OCI-LY7 (cell line): ENCODE measurements at regions of chr4 and their contacts with region 1.

Region 1: DNA sequence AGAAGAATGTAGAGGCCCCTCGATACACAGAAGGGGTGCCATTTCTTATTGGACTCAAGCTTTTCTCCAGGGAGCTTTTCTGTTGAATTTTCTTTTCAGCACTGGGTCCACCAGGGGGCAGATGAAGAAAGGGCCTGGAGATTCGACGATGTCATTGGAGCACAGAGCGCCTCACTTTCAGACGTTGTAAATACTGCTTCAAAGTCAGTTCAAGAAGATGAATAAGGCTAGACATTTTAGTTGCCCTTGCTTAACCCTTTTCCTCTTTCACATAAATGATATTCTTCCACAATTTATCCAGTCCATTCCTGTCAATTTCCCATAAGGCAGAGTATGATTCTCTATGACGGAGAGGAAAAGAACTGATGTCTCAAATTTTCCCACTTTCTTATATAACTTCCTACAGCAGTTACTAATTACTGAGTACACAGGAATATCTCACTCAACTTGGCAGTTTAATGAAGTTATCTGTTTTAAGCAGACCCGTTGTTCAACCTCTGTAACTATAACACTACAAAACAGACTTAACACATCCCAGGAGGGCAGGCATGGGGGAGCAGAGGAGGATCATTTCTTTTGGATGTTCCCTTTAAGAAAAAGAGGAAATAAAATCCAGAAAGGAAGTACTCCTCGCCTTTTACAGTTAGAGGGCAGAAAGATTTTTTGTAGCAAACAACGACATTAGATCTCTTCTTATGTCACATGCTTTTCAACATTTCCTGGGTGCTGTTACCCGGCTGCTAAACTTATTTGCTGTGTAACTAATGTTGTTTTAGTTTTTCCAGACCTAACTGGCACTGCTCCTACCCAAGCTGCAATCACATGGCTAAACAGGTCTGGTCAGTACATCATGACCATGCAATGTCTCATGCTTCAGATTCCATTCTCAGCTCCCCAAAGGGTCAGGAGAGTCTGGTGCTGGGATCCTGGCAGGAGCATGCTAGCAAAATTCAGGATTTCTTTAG is 12.2 kb upstream of the CENPU start:
- DNase-seq: peak; percentile 83
- H3K4me3 ChIP-seq: no peak overlapping the region
- H3K27ac ChIP-seq: no peak overlapping the region
- H3K4me1 ChIP-seq: peaks cover 9% of the 10 kb centered on the region
- CTCF ChIP-seq: peak; percentile 94

Region 2: DNA sequence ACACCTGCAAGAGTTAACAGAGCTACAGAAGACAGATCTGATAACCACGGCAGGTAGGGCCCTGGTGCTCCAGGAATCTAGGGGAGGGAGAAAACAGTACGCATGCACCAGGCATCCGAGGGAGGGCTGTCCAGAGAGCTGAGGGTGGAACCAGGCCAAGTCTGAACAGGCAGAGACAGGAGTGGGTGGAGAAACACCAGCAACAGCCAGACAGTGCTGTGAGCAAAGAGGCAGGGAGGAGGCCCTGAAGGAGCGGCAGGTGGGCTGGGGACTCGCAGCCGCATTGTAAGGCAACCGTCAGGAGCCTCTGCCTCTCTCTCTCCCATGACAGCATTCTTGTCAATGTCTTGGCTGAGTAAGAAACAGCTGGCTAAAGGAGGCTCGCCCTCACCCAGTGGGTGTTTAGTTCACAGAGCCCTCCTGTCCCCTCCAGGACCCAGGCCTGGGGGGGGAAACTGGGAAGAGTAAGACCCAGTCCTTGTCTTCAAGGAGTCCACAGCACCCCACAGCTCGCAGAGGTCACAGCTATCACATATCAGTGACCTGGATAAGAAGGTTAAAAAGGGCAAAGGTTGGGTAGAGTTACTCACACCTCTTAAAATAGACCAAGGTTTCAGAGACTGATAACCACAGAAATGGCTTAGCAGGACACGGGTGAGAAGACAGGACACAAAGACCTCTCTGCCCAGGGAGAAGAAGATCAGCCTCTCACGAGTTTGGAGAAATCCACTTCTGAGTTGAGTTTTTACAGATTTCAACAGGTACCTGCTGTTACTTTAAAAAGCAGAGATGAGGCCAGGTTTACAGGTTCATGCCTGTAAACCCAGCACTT is 69.1 kb after region 1 on chr4:
- CTCF ChIA-PET with region 1: interaction called, 3 read pairs
- POLR2A ChIA-PET with region 1: interaction called, 3 read pairs
- intact Hi-C with region 1: loop called (anchors 2 kb)
- DNase-seq: peak; percentile 76
- H3K4me3 ChIP-seq: peak overlapping the region; percentile 49
- H3K27ac ChIP-seq: peak overlapping the region; percentile 84
- H3K4me1 ChIP-seq: peaks cover 68% of the 10 kb centered on the region
- CTCF ChIP-seq: no peak

Region 3: GRCh38 chr4:184907216-184907615 is 161.1 kb after region 1 on chr4:
- CTCF ChIA-PET with region 1: no interaction called
- POLR2A ChIA-PET with region 1: interaction called, 7 read pairs
- intact Hi-C with region 1: loop called (anchors 5 kb)
- DNase-seq: peak; percentile 13
- H3K4me3 ChIP-seq: no peak overlapping the region
- H3K27ac ChIP-seq: no peak overlapping the region
- H3K4me1 ChIP-seq: no peaks in the 10 kb centered on the region
- CTCF ChIP-seq: peak; percentile 36; the same call in 1 of the 2 replicates

Region 4: DNA sequence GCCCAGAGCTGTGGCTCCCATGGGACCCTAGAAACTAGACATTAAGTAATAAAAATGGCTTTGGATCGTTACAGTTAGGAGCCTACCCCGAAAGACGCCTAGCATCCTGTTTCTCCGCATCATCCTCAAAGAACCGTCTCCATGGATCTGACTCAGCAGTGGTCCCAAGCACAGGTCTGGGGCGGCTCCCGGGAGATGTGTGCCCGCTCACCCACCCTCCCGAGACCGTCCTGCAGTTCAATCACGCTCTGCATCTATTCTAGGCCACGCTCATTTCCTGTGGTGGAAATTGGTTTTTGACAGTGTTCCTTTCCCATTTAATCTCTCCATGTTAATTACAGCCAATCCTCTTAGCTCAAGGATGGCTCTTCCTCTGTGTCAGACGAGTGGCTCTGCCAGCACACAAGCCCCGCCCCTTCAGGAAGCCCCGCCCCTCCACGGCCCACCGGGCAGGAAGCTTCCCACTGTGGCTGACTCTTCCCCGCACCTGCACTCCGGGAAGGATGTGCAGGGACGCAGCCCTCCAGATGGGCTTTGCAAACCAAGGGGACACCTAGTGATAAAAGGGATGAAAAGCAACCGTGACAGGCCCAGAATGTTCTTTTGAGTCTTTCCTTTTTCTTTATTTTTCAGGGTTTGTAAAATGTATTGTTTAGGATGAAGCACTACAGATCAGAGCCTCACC is 237.7 kb after region 1 on chr4:
- CTCF ChIA-PET with region 1: no interaction called
- POLR2A ChIA-PET with region 1: interaction called, 5 read pairs
- intact Hi-C with region 1: loop called (anchors 1 kb)
- DNase-seq: peak; percentile 84
- H3K4me3 ChIP-seq: no peak overlapping the region
- H3K27ac ChIP-seq: no peak overlapping the region
- H3K4me1 ChIP-seq: peaks cover 11% of the 10 kb centered on the region
- CTCF ChIP-seq: peak; percentile 78

Region 5: DNA sequence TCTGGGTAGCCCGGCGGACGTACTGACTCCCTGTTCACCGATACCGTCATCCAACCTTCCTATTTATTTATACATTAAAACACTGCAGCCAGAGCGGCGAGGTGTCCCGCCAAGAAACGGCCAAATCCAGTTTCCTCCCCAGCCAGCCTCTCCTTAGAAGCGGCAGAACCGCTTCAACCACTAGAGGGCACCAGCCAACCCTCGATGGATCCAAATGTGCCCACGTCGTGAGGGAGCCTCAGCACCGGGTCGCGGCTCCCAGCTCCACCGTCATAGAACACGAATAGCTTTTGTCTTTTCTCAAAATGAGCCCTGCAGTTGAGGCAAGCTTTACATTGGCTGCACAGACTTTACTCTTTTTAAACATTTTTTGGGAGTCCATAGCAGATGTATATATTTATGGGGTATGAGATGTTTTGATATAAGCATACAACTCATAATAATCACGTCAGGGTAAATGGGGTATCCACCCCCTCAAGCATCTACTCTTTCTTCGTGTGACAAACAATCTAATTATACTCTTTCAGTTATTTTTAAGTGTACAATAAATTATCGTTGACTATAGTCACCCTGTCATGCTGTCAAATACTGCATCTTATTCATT is 259.2 kb after region 1 on chr4:
- CTCF ChIA-PET with region 1: no interaction called
- POLR2A ChIA-PET with region 1: no interaction called
- intact Hi-C with region 1: loop called (anchors 1 kb)
- DNase-seq: peak; percentile 83
- H3K4me3 ChIP-seq: peak overlapping the region; percentile 31
- H3K27ac ChIP-seq: no peak overlapping the region
- H3K4me1 ChIP-seq: peaks cover 6% of the 10 kb centered on the region
- CTCF ChIP-seq: peak; percentile 97

Region 6: GRCh38 chr4:185020293-185020808 is 274.2 kb after region 1 on chr4:
- CTCF ChIA-PET with region 1: no interaction called
- POLR2A ChIA-PET with region 1: no interaction called
- intact Hi-C with region 1: no loop called
- DNase-seq: no peak
- H3K4me3 ChIP-seq: no peak overlapping the region
- H3K27ac ChIP-seq: no peak overlapping the region
- H3K4me1 ChIP-seq: no peaks in the 10 kb centered on the region
- CTCF ChIP-seq: no peak

Region 7: DNA sequence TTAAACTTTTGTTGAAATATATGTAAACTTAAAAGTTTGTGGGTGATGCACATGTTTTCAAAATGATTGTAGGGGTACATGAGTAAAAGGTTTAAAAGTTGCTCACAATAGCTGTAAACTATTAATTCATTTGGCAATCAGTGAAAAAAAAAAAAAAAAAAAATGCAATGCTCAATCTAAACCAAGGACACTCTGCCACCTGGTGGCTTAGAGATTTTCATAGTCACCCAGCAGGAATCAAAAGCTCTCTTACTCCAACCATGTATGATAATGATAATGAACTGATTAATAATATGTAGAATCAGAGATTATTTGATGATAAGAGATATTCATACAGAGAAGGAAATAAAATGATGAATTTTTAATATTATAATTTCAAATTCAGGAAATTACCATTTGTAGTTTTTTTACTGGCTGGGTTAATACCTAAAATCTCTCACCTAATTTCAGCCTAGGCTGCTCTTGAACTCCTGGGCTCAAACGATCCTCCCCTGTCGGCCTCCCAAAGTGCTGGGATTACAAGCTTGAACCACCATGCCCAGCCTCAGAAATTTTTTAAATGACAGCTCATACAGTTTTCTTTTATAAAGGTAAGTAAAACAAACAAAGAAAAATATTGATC is 350.0 kb after region 1 on chr4:
- CTCF ChIA-PET with region 1: no interaction called
- POLR2A ChIA-PET with region 1: no interaction called
- intact Hi-C with region 1: loop called (anchors 2 kb)
- DNase-seq: peak; percentile 60
- H3K4me3 ChIP-seq: no peak overlapping the region
- H3K27ac ChIP-seq: no peak overlapping the region
- H3K4me1 ChIP-seq: no peaks in the 10 kb centered on the region
- CTCF ChIP-seq: peak; percentile 90